Right cardiac atrium (tissue), 5 donors: ENCODE measurements at regions of chr2 and their contacts with region 1.

Region 1: GRCh38 chr2:55168221-55169154 is 63.6 kb downstream of the CLHC1 start:
- DNase-seq: peak in 2 of 3 donors; percentile 49 to 73
- ATAC-seq: peak; percentile 71 to 75
- H3K4me3 ChIP-seq: no peak overlapping the region
- H3K27ac ChIP-seq: peak overlapping the region; percentile 8
- H3K4me1 ChIP-seq: peaks cover 8% of the 10 kb centered on the region
- H3K27me3 ChIP-seq: no peaks in the 10 kb centered on the region

Region 2: GRCh38 chr2:55010149-55010591 is 158.3 kb before region 1 on chr2:
- intact Hi-C with region 1: loop called in 2 of 4 experiments (anchors 5 to 10 kb)
- DNase-seq: peak in 2 of 3 donors; percentile 23 to 49
- ATAC-seq: peak; percentile 91 to 93
- H3K4me3 ChIP-seq: peak overlapping the region; percentile 29
- H3K27ac ChIP-seq: no peak overlapping the region
- H3K4me1 ChIP-seq: peaks cover 6% of the 10 kb centered on the region
- H3K27me3 ChIP-seq: no peaks in the 10 kb centered on the region

Region 3: DNA sequence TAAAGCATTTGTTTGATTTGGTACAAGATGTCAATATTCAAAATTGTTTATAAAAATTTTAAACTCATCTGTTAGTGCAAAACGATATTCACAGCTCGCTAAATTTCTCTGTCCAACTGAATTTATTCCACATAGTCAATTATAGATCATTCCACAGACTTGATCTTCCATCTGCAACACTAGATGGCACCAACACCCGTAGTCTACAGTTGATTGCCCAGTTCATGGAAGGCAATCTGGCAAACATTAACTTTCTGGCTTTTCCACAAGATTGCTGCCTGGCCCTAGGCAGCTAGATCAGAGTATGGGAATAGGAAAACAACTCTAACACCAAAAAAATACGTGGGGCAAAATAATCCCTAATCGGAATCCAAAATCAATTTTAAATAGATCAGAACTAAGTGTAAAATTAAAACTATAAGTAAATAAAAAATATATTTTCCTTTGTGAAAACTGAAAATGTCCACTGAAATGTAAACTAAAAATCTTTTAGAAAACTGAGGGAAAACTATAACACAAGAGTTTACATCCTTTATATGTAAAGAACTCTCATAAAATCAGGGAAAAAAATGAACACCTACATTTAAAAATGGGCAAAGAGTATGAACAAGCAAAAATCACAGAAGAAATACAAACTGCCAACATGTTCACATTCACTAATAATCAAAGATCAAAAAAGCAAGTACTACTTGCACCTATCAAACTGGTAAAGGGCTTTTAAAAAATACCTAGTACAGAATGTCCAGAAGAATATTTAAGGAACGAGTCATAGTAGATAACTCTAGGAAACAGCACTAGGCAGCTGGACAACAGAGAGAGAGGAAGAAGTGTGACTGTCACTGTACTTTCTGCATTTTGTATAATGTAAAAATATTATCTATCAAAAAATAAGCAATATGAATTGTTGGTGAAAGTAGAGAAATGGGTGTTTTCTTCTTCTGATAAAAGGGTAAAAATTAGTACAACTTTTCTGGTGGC is 153.2 kb before region 1 on chr2:
- intact Hi-C with region 1: loop called in 2 of 4 experiments (anchors 5 to 10 kb)
- DNase-seq: peak in 1 of 3 donors; percentile 28
- ATAC-seq: peak; percentile 75 to 78
- H3K4me3 ChIP-seq: no peak overlapping the region
- H3K27ac ChIP-seq: no peak overlapping the region
- H3K4me1 ChIP-seq: peaks cover 3% of the 10 kb centered on the region
- H3K27me3 ChIP-seq: no peaks in the 10 kb centered on the region

Region 4: DNA sequence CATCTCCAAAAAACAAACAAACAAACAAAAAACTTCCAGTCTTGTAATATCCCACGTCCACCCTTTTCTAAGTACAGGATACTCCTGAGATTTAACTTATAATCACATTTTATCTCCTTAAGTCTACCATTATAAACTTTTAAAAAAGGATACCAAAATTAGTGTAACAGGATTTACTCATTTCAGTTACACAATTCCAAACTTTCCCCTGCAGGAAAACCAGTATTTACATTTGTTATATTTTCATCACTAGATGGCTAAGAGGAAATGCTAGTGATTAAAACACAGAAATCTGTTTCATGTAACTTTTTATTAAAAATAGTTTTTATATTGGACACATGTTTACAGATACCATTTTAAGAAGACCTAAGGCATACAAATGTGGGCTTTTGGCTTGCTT is 378.5 kb after region 1 on chr2:
- intact Hi-C with region 1: no loop called
- DNase-seq: no peak
- ATAC-seq: no peak
- H3K4me3 ChIP-seq: no peak overlapping the region
- H3K27ac ChIP-seq: no peak overlapping the region
- H3K4me1 ChIP-seq: no peaks in the 10 kb centered on the region
- H3K27me3 ChIP-seq: no peaks in the 10 kb centered on the region

Region 5: GRCh38 chr2:55875434-55876135 is 707.1 kb after region 1 on chr2:
- intact Hi-C with region 1: no loop called
- DNase-seq: no peak
- ATAC-seq: peak; percentile 20 to 55
- H3K4me3 ChIP-seq: no peak overlapping the region
- H3K27ac ChIP-seq: peak overlapping the region; percentile 36
- H3K4me1 ChIP-seq: peaks cover 10% of the 10 kb centered on the region
- H3K27me3 ChIP-seq: no peaks in the 10 kb centered on the region